Heart right ventricle (tissue), 16 donors: ENCODE measurements at regions of chr11 and their contacts with region 1.

Region 1: GRCh38 chr11:11806586-11806985 is 35.2 kb upstream of the USP47 start:
- DNase-seq: no peak
- ATAC-seq: peak in 4 of 8 donors; percentile 45 to 65 (median 56)
- H3K4me3 ChIP-seq: no peak overlapping the region
- H3K27ac ChIP-seq: peak overlapping the region in 4 of 10 donors; percentile 34 to 62 (median 52)
- H3K4me1 ChIP-seq: peaks cover 0 to 20% (median 14%) of the 10 kb centered on the region in 9 donors
- H3K27me3 ChIP-seq: no peaks in the 10 kb centered on the region
- CTCF ChIP-seq: no peak

Region 2: GRCh38 chr11:11884774-11885481 is 78.3 kb after region 1 on chr11:
- intact Hi-C with region 1: loop called in 4 of 10 experiments (anchors 10 kb)
- DNase-seq: no peak
- ATAC-seq: no peak
- H3K4me3 ChIP-seq: no peak overlapping the region
- H3K27ac ChIP-seq: no peak overlapping the region
- H3K4me1 ChIP-seq: peaks cover 0 to 34% (median 19%) of the 10 kb centered on the region in 9 donors
- H3K27me3 ChIP-seq: no peaks in the 10 kb centered on the region
- CTCF ChIP-seq: no peak

Region 3: GRCh38 chr11:11895672-11896071 is 89.1 kb after region 1 on chr11:
- intact Hi-C with region 1: loop called in 3 of 10 experiments (anchors 10 kb)
- DNase-seq: no peak
- ATAC-seq: no peak
- H3K4me3 ChIP-seq: no peak overlapping the region
- H3K27ac ChIP-seq: no peak overlapping the region
- H3K4me1 ChIP-seq: peaks cover 0 to 6% (median 0%) of the 10 kb centered on the region in 9 donors
- H3K27me3 ChIP-seq: no peaks in the 10 kb centered on the region
- CTCF ChIP-seq: peak in 4 of 9 donors; percentile 25 to 38 (median 32)

Region 4: DNA sequence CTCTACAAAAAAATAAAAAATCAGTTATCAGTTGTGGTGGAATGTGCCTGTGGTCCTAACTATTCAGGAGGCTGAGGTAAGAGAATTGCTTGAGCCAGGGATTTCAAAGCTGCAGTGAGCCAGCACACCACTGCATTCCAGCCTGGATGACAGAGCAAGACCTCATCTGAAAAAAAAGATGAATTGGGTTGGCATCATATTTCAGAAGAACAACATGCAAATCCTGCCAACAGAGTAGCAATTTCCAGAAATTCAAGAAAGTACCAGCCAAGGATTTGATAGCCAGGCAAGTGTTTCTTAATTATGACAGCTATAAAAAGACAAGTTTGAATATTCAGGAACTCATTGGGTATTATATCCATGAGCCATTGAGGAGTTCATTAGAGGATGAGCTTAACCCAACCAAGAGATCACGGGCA is 110.4 kb after region 1 on chr11:
- intact Hi-C with region 1: loop called in 4 of 10 experiments (anchors 10 kb)
- DNase-seq: no peak
- ATAC-seq: peak in 5 of 8 donors; percentile 34 to 73 (median 45)
- H3K4me3 ChIP-seq: no peak overlapping the region
- H3K27ac ChIP-seq: peak overlapping the region in 5 of 10 donors; percentile 3 to 51 (median 11)
- H3K4me1 ChIP-seq: peaks cover 0 to 19% (median 7%) of the 10 kb centered on the region in 9 donors
- H3K27me3 ChIP-seq: no peaks in the 10 kb centered on the region
- CTCF ChIP-seq: no peak

Region 5: DNA sequence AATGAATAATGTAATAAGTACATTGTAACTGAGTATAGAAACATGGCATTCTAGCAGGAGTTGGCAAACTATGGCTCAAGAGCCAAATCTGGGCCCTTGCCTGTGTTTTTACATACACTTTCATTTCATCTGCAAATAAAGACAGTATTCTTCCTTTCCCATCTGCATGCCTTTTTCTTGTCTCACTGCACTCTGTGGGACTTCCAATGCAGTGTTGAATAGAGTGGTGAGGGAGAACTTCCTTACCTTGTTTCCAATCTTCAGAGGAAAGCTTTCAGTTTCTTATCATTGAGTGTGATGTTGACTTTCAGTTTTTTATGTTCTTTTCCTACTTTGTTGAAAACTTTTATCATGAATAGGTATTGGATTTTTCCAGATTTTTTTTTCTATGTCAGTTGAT is 117.2 kb after region 1 on chr11:
- intact Hi-C with region 1: loop called in 4 of 10 experiments (anchors 10 kb)
- DNase-seq: no peak
- ATAC-seq: no peak
- H3K4me3 ChIP-seq: no peak overlapping the region
- H3K27ac ChIP-seq: peak overlapping the region in 1 of 10 donors; percentile 1
- H3K4me1 ChIP-seq: peaks cover 0 to 14% (median 0%) of the 10 kb centered on the region in 9 donors
- H3K27me3 ChIP-seq: no peaks in the 10 kb centered on the region
- CTCF ChIP-seq: no peak